Activated T-helper 1 cell treated with anti-CD3 and anti-CD28 coated beads, Interleukin-12 subunit alpha, Interleukin-12 subunit beta, Interleukin-2, Interleukin-4 antibody, amounts not matched to agents 30 ng/mL and 10 ng/mL and 1 ng/mL, durations not matched to agents 14 hours and 24 hours and 36 hours (primary cell): ENCODE measurements at regions of chr18 and their contacts with region 1.

Region 1: DNA sequence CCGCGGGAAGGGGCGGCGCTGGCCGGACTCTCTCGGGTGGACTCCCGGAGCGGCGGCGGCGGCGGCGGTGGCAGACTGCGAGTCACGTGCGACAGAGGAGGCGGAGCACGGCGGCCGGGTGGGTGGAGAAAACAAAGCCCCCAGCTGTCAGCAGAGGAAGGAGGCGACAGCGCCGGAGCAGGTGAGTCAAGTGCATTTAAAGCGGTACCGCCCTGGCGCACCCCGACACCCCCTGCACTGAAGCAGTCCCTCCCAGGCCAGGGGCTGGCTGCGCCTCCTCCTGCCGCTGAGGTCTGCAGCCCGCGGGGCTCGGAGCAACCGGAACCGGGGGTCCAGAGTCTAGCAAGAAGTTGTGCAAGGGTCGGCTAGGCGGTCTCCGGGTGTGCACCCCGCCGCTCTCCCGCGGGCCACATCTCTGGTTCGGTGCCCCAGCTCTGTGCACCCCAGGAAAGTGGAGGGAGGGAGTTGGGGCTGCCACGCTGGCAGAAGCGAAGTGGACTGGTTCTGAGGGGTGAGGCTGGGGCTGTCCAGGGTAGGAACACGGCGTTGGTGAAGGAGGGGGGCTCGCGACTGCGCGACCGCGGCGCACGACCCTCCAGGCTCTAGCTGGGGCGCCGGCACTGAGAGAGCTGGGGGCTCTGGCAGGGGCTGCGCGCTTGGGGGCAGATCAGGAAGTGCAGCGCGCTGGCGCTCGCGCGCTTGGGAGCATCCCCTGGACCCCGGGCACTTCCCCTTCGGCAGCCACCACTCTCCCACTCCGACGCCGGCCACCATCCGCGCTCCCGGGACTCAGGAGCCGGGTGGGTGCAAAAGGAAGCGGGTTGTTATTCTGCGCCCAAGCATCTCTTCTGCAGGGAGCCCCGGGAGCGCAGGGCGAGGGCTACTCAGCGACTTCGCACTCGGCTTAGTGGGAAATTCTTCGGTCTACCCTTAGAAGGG is 64.0 kb upstream of the MAPRE2 start:
- DNase-seq: peak; percentile 55
- H3K4me3 Mint-ChIP-seq: peak overlapping the region; percentile 78
- H3K27ac Mint-ChIP-seq: no peak overlapping the region
- H3K4me1 Mint-ChIP-seq: peaks cover 25% of the 10 kb centered on the region
- H3K27me3 Mint-ChIP-seq: peaks cover 31% of the 10 kb centered on the region

Region 2: DNA sequence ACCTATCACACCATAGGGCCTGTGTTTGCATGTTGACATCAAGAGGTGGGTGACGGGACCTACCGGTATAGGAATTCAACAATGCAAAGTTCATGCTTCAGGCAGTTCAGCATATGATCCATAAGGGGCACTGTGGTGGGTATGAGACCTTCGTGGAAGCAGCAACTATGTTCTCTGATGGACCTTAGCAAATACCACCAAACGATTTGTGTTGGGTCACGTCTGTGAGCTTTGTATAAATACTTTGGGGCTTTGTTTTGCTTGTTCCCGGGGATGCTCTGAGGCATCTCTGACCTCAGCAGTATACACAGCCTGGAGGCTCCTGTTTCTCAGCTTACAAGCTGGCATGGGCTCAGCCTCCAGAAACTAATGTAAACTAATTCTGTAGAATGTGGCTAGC is 155.4 kb before region 1 on chr18:
- intact Hi-C with region 1: no loop called
- DNase-seq: no peak
- H3K4me3 Mint-ChIP-seq: no peak overlapping the region
- H3K27ac Mint-ChIP-seq: no peak overlapping the region
- H3K4me1 Mint-ChIP-seq: no peaks in the 10 kb centered on the region
- H3K27me3 Mint-ChIP-seq: peaks cover 11% of the 10 kb centered on the region

Region 3: GRCh38 chr18:34857320-34857719 is 119.8 kb before region 1 on chr18:
- intact Hi-C with region 1: loop called (anchors 1 kb)
- DNase-seq: no peak
- H3K4me3 Mint-ChIP-seq: no peak overlapping the region
- H3K27ac Mint-ChIP-seq: no peak overlapping the region
- H3K4me1 Mint-ChIP-seq: peaks cover 7% of the 10 kb centered on the region
- H3K27me3 Mint-ChIP-seq: peaks cover 43% of the 10 kb centered on the region

Region 4: DNA sequence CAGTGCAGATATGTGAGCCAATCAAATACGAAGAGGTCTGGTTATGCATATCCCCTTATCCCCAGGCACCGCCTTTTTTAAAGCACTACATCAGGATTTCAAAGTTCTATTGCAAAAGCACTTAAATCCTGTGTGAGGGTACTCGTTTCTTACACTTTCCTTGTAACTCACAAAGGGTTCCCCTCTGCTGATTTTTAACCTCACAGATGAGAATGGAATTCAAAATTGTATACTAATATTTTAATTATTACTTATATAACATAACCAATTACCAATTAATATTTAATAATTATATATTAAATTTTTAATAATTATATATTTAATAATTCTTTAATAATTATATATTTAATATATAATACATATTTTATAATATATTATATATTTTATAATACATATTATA is 62.1 kb before region 1 on chr18:
- intact Hi-C with region 1: loop called (anchors 5 kb)
- DNase-seq: no peak
- H3K4me3 Mint-ChIP-seq: no peak overlapping the region
- H3K27ac Mint-ChIP-seq: no peak overlapping the region
- H3K4me1 Mint-ChIP-seq: no peaks in the 10 kb centered on the region
- H3K27me3 Mint-ChIP-seq: no peaks in the 10 kb centered on the region

Region 5: DNA sequence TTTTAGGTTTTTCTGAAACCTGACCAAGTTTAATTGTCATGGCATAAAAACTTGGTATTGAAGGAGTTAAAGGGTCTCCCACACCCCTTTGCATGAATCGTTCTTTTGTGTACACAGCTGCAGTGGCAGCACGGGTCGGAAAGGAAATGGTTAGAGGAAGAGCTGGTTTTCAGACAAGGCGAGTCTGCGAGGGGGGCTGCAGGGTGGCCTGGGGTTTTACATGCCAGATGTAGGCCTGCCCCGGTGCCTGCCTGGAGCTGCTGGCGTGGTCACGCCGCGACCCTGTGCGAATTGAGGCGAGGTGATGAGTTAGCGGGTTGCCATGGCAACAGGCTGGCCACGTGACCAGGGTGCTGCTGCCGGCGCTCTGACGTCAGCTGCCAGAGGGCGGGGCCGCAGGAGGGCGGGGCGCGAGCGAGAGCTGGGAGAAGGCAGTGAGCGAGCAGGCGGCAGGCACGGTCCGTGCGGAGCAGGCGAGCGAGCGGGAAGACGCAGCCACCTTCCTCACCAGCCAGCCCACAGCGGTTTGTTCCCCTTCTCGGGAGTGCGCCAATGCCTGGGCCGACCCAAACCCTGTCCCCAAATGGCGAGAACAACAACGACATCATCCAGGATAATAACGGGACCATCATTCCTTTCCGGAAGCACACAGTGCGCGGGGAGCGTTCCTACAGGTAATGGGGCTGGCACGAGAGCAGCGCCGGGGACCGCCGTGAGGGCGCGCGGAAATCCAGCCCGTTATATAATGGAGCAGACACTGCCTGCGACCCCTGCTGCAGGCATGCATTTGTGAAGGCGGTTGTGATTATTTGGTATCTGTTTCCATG is 64.0 kb after region 1 on chr18 and contains the start of gene MAPRE2:
- intact Hi-C with region 1: loop called (anchors 1 kb)
- DNase-seq: peak; percentile 98
- H3K4me3 Mint-ChIP-seq: peak within 1 kb of the TSS; percentile 96
- H3K27ac Mint-ChIP-seq: peak within 1 kb of the TSS; percentile 99
- H3K4me1 Mint-ChIP-seq: peaks cover 57% of the 10 kb centered on the region
- H3K27me3 Mint-ChIP-seq: no peaks in the 10 kb centered on the region
- total RNA-seq, gene MAPRE2: 50.7 TPM in 2 replicates

Region 6: GRCh38 chr18:35158728-35159450 is 181.7 kb after region 1 on chr18:
- intact Hi-C with region 1: loop called (anchors 1 kb)
- DNase-seq: peak; percentile 17
- H3K4me3 Mint-ChIP-seq: no peak overlapping the region
- H3K27ac Mint-ChIP-seq: peak overlapping the region; percentile 89
- H3K4me1 Mint-ChIP-seq: peaks cover 29% of the 10 kb centered on the region
- H3K27me3 Mint-ChIP-seq: no peaks in the 10 kb centered on the region

Region 7: GRCh38 chr18:35616664-35617423 is 639.7 kb after region 1 on chr18:
- intact Hi-C with region 1: loop called (anchors 5 kb)
- DNase-seq: peak; percentile 45
- H3K4me3 Mint-ChIP-seq: no peak overlapping the region
- H3K27ac Mint-ChIP-seq: no peak overlapping the region
- H3K4me1 Mint-ChIP-seq: peaks cover 19% of the 10 kb centered on the region
- H3K27me3 Mint-ChIP-seq: no peaks in the 10 kb centered on the region

Region 8: GRCh38 chr18:36129300-36130038 is 1152.3 kb after region 1 on chr18 and contains the starts of genes ELP2 and SLC39A6:
- intact Hi-C with region 1: loop called (anchors 2 kb)
- DNase-seq: peak; percentile 93
- H3K4me3 Mint-ChIP-seq: peak within 1 kb of the TSS; percentile 89
- H3K27ac Mint-ChIP-seq: peak within 1 kb of the TSS; percentile 91
- H3K4me1 Mint-ChIP-seq: peaks cover 53% of the 10 kb centered on the region
- H3K27me3 Mint-ChIP-seq: no peaks in the 10 kb centered on the region
- total RNA-seq, gene ELP2: 97.1 and 104 TPM in 2 replicates
- total RNA-seq, gene SLC39A6: 53.5 and 54.4 TPM in 2 replicates